Naive thymus-derived CD4-positive, alpha-beta T cell (primary cell): ENCODE measurements at regions of chr15 and their contacts with region 1.

Region 1: DNA sequence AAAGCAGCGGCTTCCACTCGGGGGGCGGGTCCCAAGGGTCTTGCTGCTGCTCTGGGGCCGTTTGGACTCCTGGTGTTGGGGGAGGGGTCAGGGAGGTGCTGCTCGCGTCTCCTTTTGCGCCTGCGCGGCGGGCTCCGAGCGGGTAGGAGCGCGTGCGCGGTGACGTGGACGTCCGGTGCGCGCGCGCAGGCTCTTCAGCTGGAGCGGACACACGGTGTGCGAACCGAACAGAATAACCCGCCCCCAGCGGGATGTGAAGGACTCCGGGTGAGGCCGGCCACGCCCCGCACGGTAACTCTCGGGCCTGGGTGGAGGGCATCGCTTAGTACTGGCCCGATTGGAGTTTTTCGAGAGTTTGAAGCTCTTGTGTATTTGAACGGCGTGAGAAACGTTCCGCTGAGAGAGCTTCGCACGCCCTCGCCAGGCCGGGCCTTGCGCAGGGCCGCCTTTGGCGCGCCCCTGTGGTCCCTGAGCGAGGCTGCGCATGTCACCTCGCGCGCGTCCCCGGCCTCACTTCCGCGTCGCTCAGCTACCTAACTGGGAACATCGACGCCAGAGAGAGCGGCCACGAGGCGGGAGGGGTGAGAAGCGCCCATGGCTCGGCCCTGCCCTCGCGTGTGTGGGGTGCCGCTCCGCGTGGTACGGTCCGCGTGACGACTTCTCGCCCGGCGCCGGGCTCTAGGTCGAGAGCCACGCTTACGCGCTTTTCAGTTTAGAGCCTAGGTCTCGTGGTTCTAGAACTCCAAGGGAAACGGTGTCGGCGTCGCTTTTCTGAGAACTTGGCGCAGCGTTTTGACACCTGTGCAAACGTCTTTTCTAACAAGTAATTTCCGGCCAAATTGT is at the start of gene MGA:
- DNase-seq: peak; percentile 86 to 93 (median 91)
- ATAC-seq: peak; percentile 87
- H3K4me3 ChIP-seq: peak within 1 kb of the TSS; percentile 64
- H3K4me3 Mint-ChIP-seq: peak within 1 kb of the TSS; percentile 90 to 100 (median 92)
- H3K27ac ChIP-seq: peak within 1 kb of the TSS; percentile 76
- H3K27ac Mint-ChIP-seq: peak within 1 kb of the TSS; percentile 92 to 98 (median 96)
- H3K4me1 ChIP-seq: peaks cover 20 to 28% of the 10 kb centered on the region in 2 donors
- H3K4me1 Mint-ChIP-seq: peaks cover 16 to 64% (median 47%) of the 10 kb centered on the region in 7 donors
- H3K27me3 ChIP-seq: no peaks in the 10 kb centered on the region
- H3K27me3 Mint-ChIP-seq: peaks cover 0 to 45% (median 0%) of the 10 kb centered on the region in 5 donors
- total RNA-seq, gene MGA: 35.8 to 73.8 (median 47.3) TPM

Region 2: DNA sequence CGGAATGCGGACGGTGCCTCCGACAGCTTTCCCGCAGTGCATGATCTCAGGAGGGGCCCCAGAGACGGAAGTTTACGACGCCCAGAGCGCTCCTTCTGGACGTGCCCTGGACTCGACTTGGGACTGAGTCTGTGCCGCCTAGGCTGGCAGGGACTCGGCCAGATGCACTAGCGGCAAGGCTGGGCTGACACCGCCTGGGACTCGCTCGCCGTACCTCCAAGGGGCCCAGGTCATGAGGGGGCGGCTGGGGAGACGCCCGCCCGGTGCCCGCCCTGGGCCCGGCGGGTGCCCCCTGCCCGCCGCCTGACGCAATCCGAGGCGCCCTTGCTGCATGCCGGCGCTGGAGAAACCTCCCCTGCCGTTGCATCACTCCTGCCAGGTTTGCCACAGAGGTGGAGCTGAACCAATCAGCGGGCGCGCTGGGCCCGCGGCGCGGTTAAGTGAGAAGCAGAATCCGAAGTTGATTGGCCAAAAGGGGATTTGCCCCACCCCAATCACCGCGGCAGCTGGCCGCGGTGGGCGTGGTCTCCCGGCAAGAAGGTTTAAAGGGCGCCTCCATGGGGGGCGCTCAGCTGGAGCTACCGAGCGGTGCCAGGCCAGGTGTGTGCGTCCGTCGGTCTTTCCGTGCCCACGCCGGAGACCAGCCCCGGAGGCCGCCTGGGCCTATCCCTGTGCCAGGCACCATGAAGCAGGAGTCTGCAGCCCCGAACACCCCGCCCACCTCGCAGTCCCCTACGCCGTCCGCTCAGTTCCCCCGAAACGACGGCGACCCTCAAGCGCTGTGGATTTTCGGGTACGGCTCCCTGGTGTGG is 707.3 kb before region 1 on chr15 and contains the start of gene CHAC1:
- CTCF ChIA-PET with region 1: no interaction called
- POLR2A ChIA-PET with region 1: no interaction called
- intact Hi-C with region 1: loop called in 1 of 2 experiments (anchors 2 kb)
- DNase-seq: peak; percentile 79 to 97 (median 94)
- ATAC-seq: peak; percentile 98
- H3K4me3 ChIP-seq: peak within 1 kb of the TSS; percentile 68
- H3K4me3 Mint-ChIP-seq: peak within 1 kb of the TSS; percentile 87 to 96 (median 94)
- H3K27ac ChIP-seq: peak within 1 kb of the TSS; percentile 74
- H3K27ac Mint-ChIP-seq: peak within 1 kb of the TSS in 8 of 9 donors; percentile 76 to 95 (median 88)
- H3K4me1 ChIP-seq: peaks cover 10 to 14% of the 10 kb centered on the region in 2 donors
- H3K4me1 Mint-ChIP-seq: peaks cover 7 to 34% (median 19%) of the 10 kb centered on the region in 7 donors
- H3K27me3 ChIP-seq: no peaks in the 10 kb centered on the region
- H3K27me3 Mint-ChIP-seq: peaks cover 0 to 4% (median 0%) of the 10 kb centered on the region in 5 donors
- total RNA-seq, gene CHAC1: 0.24 to 5.7 (median 1.1) TPM

Region 3: GRCh38 chr15:41401904-41402267 is 258.6 kb before region 1 on chr15:
- CTCF ChIA-PET with region 1: no interaction called
- POLR2A ChIA-PET with region 1: no interaction called
- intact Hi-C with region 1: loop called (anchors 1 to 2 kb)
- DNase-seq: no peak
- ATAC-seq: no peak
- H3K4me3 ChIP-seq: peak overlapping the region; percentile 92
- H3K4me3 Mint-ChIP-seq: peak overlapping the region; percentile 87 to 97 (median 96)
- H3K27ac ChIP-seq: peak overlapping the region; percentile 81
- H3K27ac Mint-ChIP-seq: peak overlapping the region; percentile 89 to 96 (median 94)
- H3K4me1 ChIP-seq: peaks cover 0 to 14% of the 10 kb centered on the region in 2 donors
- H3K4me1 Mint-ChIP-seq: peaks cover 0 to 32% (median 24%) of the 10 kb centered on the region in 7 donors
- H3K27me3 ChIP-seq: no peaks in the 10 kb centered on the region
- H3K27me3 Mint-ChIP-seq: no peaks in the 10 kb centered on the region

Region 4: GRCh38 chr15:41557673-41558399 is 102.6 kb before region 1 on chr15:
- CTCF ChIA-PET with region 1: no interaction called
- POLR2A ChIA-PET with region 1: interaction called, 4 read pairs
- intact Hi-C with region 1: loop called in 1 of 2 experiments (anchors 1 kb)
- DNase-seq: peak; percentile 58 to 83 (median 78)
- ATAC-seq: peak; percentile 87
- H3K4me3 ChIP-seq: no peak overlapping the region
- H3K4me3 Mint-ChIP-seq: peak overlapping the region; percentile 86 to 93 (median 89)
- H3K27ac ChIP-seq: no peak overlapping the region
- H3K27ac Mint-ChIP-seq: peak overlapping the region; percentile 53 to 95 (median 79)
- H3K4me1 ChIP-seq: peaks cover 15 to 19% of the 10 kb centered on the region in 2 donors
- H3K4me1 Mint-ChIP-seq: peaks cover 14 to 24% (median 20%) of the 10 kb centered on the region in 7 donors
- H3K27me3 ChIP-seq: peaks cover 3 to 6% of the 10 kb centered on the region in 2 donors
- H3K27me3 Mint-ChIP-seq: peaks cover 0 to 49% (median 19%) of the 10 kb centered on the region in 5 donors

Region 5: DNA sequence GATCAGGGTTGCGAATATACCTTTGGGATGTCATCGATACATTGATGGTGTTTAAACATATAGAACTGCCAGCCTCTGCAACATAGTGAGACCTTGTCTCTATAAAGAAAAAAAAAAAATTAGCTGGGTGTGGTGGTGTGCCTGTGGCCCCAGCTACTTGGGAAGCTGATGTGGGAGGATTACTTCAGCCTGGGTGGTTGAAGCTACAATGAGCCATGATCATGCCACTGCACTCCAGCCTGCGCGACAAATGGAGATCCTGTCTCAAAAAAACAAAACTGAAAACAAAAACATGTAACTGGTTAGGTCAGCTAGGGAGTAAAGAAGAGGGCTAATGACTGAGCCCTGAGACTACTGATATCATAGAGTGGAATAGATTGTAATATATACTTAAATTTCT is 31.0 kb before region 1 on chr15:
- CTCF ChIA-PET with region 1: interaction called, 3 read pairs
- POLR2A ChIA-PET with region 1: interaction called, 19 read pairs
- intact Hi-C with region 1: no loop called
- DNase-seq: no peak
- ATAC-seq: no peak
- H3K4me3 ChIP-seq: no peak overlapping the region
- H3K4me3 Mint-ChIP-seq: no peak overlapping the region
- H3K27ac ChIP-seq: no peak overlapping the region
- H3K27ac Mint-ChIP-seq: no peak overlapping the region
- H3K4me1 ChIP-seq: no peaks in the 10 kb centered on the region
- H3K4me1 Mint-ChIP-seq: peaks cover 7 to 17% (median 9%) of the 10 kb centered on the region in 7 donors
- H3K27me3 ChIP-seq: no peaks in the 10 kb centered on the region
- H3K27me3 Mint-ChIP-seq: no peaks in the 10 kb centered on the region

Region 6: GRCh38 chr15:41930221-41930866 is 269.9 kb after region 1 on chr15:
- CTCF ChIA-PET with region 1: no interaction called
- POLR2A ChIA-PET with region 1: no interaction called
- intact Hi-C with region 1: loop called in 1 of 2 experiments (anchors 10 kb)
- DNase-seq: no peak
- ATAC-seq: peak; percentile 50
- H3K4me3 ChIP-seq: no peak overlapping the region
- H3K4me3 Mint-ChIP-seq: no peak overlapping the region
- H3K27ac ChIP-seq: no peak overlapping the region
- H3K27ac Mint-ChIP-seq: no peak overlapping the region
- H3K4me1 ChIP-seq: peaks cover 18 to 32% of the 10 kb centered on the region in 2 donors
- H3K4me1 Mint-ChIP-seq: peaks cover 26 to 52% (median 45%) of the 10 kb centered on the region in 7 donors
- H3K27me3 ChIP-seq: no peaks in the 10 kb centered on the region
- H3K27me3 Mint-ChIP-seq: no peaks in the 10 kb centered on the region

Region 7: GRCh38 chr15:41965441-41966413 is 305.3 kb after region 1 on chr15:
- CTCF ChIA-PET with region 1: no interaction called
- POLR2A ChIA-PET with region 1: no interaction called
- intact Hi-C with region 1: no loop called
- DNase-seq: no peak
- ATAC-seq: no peak
- H3K4me3 ChIP-seq: no peak overlapping the region
- H3K4me3 Mint-ChIP-seq: no peak overlapping the region
- H3K27ac ChIP-seq: no peak overlapping the region
- H3K27ac Mint-ChIP-seq: peak overlapping the region in 4 of 9 donors; percentile 31 to 68 (median 46)
- H3K4me1 ChIP-seq: peaks cover 12 to 13% of the 10 kb centered on the region in 2 donors
- H3K4me1 Mint-ChIP-seq: peaks cover 37 to 59% (median 50%) of the 10 kb centered on the region in 7 donors
- H3K27me3 ChIP-seq: no peaks in the 10 kb centered on the region
- H3K27me3 Mint-ChIP-seq: no peaks in the 10 kb centered on the region

Region 8: DNA sequence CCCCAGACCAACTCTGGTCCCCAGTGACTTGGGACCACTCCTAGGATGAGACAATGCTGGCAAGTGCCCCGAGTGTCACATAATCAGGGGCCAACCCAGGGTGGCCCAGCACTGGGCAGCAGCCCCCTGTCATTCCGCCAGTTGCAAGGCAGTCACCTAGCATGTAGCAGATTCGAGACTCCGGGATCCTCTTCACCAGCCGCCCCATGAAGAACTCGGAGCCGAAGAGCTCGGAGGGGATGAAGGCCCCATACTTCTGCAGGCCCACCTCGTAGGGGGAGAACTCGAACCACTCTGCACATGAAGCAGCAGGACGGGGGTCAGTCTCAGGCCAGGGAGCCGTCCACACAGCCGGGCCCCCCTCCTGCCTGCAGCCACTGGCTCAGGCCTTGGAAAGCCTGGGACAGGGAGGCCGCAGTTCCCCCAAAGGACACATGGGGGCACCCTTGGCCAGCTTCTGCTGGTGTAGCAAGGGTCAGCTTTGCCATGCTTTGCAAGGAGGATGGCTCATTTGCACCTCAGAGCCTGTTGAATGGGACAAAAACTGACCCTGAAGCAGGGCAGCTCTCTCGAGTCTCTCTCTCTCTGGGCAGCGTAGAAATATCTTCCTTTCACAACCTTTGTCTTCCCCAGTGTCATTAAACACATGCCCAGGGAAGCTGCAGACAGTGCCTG is 328.9 kb after region 1 on chr15:
- CTCF ChIA-PET with region 1: no interaction called
- POLR2A ChIA-PET with region 1: no interaction called
- intact Hi-C with region 1: no loop called
- DNase-seq: peak; percentile 54 to 88 (median 74)
- ATAC-seq: peak; percentile 94
- H3K4me3 ChIP-seq: no peak overlapping the region
- H3K4me3 Mint-ChIP-seq: no peak overlapping the region
- H3K27ac ChIP-seq: no peak overlapping the region
- H3K27ac Mint-ChIP-seq: no peak overlapping the region
- H3K4me1 ChIP-seq: no peaks in the 10 kb centered on the region
- H3K4me1 Mint-ChIP-seq: peaks cover 0 to 2% (median 0%) of the 10 kb centered on the region in 7 donors
- H3K27me3 ChIP-seq: no peaks in the 10 kb centered on the region
- H3K27me3 Mint-ChIP-seq: no peaks in the 10 kb centered on the region

Region 9: DNA sequence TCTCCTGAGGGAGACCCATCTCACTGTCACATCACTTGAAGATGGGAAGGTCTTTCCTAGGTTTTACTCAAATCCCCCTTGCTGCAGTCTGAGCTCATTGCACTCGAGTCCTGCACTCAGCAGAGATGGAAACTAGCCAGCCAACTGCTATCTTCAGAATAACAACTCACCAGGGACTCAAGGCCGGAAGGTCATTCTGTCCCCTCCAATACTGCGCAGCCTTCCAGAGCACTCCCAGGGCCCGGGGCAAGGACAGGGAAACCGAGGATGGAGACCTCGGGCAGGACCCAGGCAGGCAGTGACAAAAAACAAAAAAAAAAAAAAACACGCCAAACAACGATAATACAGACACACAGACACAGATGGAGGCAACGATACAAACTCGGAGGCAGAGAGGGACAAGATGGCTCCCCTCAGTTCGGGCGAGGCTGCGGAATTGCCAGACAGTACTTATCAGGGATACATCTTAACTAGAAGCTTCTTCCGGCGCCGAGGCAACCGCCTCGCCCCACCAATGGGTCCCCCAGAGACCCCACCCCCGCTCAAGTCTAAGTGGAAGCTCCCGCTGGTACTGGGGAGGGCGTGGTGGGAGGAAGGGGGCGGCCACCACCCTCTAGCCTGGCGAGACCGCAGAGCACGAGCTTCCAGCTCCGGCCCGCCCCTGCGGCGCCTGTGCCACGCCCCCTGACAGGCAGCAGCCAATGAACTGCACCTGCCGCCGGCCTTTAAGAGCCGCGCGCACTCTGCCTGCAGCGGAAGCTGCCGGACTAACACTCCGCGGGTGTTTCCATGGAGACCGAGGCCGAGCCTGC is 1850.0 kb after region 1 on chr15:
- CTCF ChIA-PET with region 1: no interaction called
- POLR2A ChIA-PET with region 1: no interaction called
- intact Hi-C with region 1: loop called in 1 of 2 experiments (anchors 2 kb)
- DNase-seq: peak; percentile 91 to 96 (median 94)
- ATAC-seq: peak; percentile 97
- H3K4me3 ChIP-seq: peak overlapping the region; percentile 88
- H3K4me3 Mint-ChIP-seq: peak overlapping the region; percentile 89 to 100 (median 94)
- H3K27ac ChIP-seq: peak overlapping the region; percentile 76
- H3K27ac Mint-ChIP-seq: peak overlapping the region; percentile 92 to 99 (median 97)
- H3K4me1 ChIP-seq: peaks cover 14 to 17% of the 10 kb centered on the region in 2 donors
- H3K4me1 Mint-ChIP-seq: peaks cover 14 to 51% (median 28%) of the 10 kb centered on the region in 7 donors
- H3K27me3 ChIP-seq: no peaks in the 10 kb centered on the region
- H3K27me3 Mint-ChIP-seq: peaks cover 0 to 2% (median under 1%) of the 10 kb centered on the region in 5 donors